Panc1 (cell line): ENCODE measurements at regions of chr3 and their contacts with region 1.

Region 1: GRCh38 chr3:23961066-23961465 is 16.0 kb downstream of the NR1D2 start:
- DNase-seq: no peak
- ATAC-seq: no peak
- H3K4me3 ChIP-seq: no peak overlapping the region
- H3K27ac ChIP-seq: no peak overlapping the region; the same call in 1 of the 2 replicates
- H3K4me1 ChIP-seq: peaks cover 20% of the 10 kb centered on the region
- H3K27me3 ChIP-seq: no peaks in the 10 kb centered on the region
- CTCF ChIP-seq: no peak

Region 2: GRCh38 chr3:23869977-23870662 is 90.9 kb before region 1 on chr3:
- CTCF ChIA-PET with region 1: no interaction called
- POLR2A ChIA-PET with region 1: interaction called, 11 read pairs
- in situ Hi-C with region 1: no loop called
- intact Hi-C with region 1: no loop called
- DNase-seq: no peak
- ATAC-seq: no peak
- H3K4me3 ChIP-seq: no peak overlapping the region
- H3K27ac ChIP-seq: no peak overlapping the region
- H3K4me1 ChIP-seq: peaks cover 27% of the 10 kb centered on the region
- H3K27me3 ChIP-seq: no peaks in the 10 kb centered on the region
- CTCF ChIP-seq: no peak

Region 3: DNA sequence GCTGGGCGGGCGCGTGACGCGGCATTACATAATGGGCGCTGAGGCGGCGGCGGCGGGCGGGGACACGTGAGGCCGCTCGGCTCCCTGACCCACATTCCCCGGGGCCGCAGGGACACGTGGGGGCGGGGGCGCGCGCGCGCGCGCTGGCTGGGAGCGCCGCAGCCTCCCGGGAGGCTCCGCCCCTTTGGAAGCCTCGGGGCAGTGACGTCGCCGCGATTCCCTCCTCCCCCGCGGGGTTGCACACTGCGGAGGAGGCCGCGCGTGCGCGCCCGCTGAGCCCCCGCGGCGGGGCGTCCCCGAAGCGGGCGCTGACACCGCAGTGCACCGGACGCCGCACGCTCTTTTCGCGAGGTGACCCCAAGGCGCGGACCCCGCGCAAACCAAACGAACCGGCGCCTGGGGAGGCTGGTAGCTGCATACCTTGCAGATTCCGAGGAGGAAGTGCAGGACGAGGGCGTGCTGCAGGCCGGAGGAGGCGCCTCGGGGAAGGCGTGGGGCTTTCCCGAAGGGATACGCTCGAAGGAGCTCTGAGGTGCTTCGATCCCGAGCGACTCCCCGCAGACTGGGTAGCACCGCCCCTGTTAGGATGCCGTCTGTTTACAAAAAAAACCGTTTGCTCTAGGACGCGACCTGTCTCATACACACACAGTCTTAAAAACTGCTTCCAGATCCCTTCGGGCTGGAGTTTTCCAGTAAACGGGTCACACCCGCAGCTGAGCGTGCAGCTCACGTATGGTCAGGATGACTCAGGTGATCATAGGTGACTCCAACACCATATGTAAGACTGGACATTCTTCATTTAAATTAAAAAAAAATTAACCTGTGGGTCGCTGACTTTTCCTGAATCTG is 14.9 kb before region 1 on chr3:
- CTCF ChIA-PET with region 1: no interaction called
- POLR2A ChIA-PET with region 1: interaction called, 11 read pairs
- in situ Hi-C with region 1: no loop called
- intact Hi-C with region 1: no loop called
- DNase-seq: peak; percentile 61
- ATAC-seq: peak; percentile 88
- H3K4me3 ChIP-seq: peak overlapping the region; percentile 68 to 80
- H3K27ac ChIP-seq: peak overlapping the region; percentile 86
- H3K4me1 ChIP-seq: peaks cover 33% of the 10 kb centered on the region
- H3K27me3 ChIP-seq: no peaks in the 10 kb centered on the region
- CTCF ChIP-seq: no peak

Region 4: GRCh38 chr3:24377218-24377993 is 416.3 kb after region 1 on chr3:
- CTCF ChIA-PET with region 1: no interaction called
- POLR2A ChIA-PET with region 1: no interaction called
- in situ Hi-C with region 1: no loop called
- intact Hi-C with region 1: no loop called
- DNase-seq: no peak
- ATAC-seq: no peak
- H3K4me3 ChIP-seq: no peak overlapping the region
- H3K27ac ChIP-seq: no peak overlapping the region
- H3K4me1 ChIP-seq: 0 out of 2 replicates have a peak, but pooled peaks cover 5% of the 10 kb centered on the region
- H3K27me3 ChIP-seq: no peaks in the 10 kb centered on the region
- CTCF ChIP-seq: no peak

Region 5: GRCh38 chr3:25527801-25528200 is 1566.7 kb after region 1 on chr3:
- CTCF ChIA-PET with region 1: no interaction called
- POLR2A ChIA-PET with region 1: no interaction called
- in situ Hi-C with region 1: no loop called
- intact Hi-C with region 1: no loop called
- DNase-seq: no peak
- ATAC-seq: no peak
- H3K4me3 ChIP-seq: no peak overlapping the region
- H3K27ac ChIP-seq: no peak overlapping the region
- H3K4me1 ChIP-seq: no peaks in the 10 kb centered on the region
- H3K27me3 ChIP-seq: no peaks in the 10 kb centered on the region
- CTCF ChIP-seq: no peak